HEK293 (cell line): ENCODE measurements at regions of chr11 and their contacts with region 1.

Region 1: DNA sequence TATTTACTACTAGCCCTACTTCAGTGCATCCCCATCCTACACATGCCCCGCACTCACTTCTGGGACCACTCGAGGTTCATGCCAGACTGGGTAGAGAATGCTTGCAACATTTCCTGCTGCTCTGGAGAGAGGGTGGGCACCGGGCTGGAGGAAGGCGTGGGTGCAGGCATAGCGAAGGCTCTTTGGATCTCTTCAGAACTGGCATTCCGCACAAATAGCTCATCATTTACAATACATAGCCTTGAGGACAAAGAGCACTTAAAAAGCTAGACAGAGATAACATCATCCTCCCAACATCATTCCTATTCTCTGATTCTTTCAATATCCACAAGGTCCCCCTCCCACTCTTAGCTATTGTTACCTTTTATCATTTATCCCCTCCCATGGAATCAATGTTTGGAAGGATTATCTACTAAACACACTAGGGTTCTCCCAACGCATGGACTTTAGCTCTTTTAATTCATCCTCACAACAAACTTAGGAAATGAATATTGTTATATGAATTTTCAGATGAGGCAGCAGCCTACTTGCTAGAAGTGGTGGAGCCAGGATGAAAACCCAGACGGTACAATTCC is 2.5 kb upstream of the TMEM223 start:
- H3K4me3 ChIP-seq: no peak overlapping the region
- H3K27ac ChIP-seq: no peak overlapping the region
- H3K4me1 ChIP-seq: no peaks in the 10 kb centered on the region
- CTCF ChIP-seq: no peak

Region 2: DNA sequence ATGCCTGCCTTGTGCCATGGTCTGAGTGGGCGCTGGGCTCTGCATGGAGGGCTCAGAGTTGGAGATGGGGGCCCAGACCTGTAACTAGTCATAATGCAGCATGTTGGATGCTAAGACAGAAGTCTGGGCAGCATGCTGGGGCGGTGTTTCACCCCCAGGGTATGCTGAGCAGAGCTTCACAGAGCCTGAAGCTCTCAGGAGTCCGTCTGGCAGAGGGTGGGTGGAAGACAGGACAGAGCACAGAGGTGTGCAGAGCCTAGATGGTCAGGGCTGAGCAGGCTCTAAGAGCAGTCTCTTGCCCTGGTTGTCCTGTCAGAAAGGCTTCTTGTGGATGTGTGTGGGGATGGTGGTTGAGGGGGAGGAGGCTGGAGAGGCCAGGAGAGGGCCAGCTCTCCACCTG is 15.8 kb before region 1 on chr11:
- CTCF ChIA-PET with region 1: no interaction called
- POLR2A ChIA-PET with region 1: no interaction called
- H3K4me3 ChIP-seq: no peak overlapping the region
- H3K27ac ChIP-seq: no peak overlapping the region
- H3K4me1 ChIP-seq: no peaks in the 10 kb centered on the region
- CTCF ChIP-seq: no peak

Region 3: GRCh38 chr11:62889484-62890437 is 95.5 kb after region 1 on chr11:
- CTCF ChIA-PET with region 1: no interaction called
- POLR2A ChIA-PET with region 1: interaction called, 11 read pairs
- H3K4me3 ChIP-seq: no peak overlapping the region
- H3K27ac ChIP-seq: no peak overlapping the region
- H3K4me1 ChIP-seq: no peaks in the 10 kb centered on the region
- CTCF ChIP-seq: no peak